ENCODE measurements at regions of chr6 and their contacts with region 1.

Region 1: GRCh38 chr6:142459271-142459670 is 157.5 kb downstream of the ADGRG6 start:
- DNase-seq: no peak
- ATAC-seq: no peak
- H3K4me3 ChIP-seq: no peak overlapping the region
- H3K27ac ChIP-seq: no peak overlapping the region
- H3K4me1 ChIP-seq: no peaks in the 10 kb centered on the region
- H3K27me3 ChIP-seq: no peaks in the 10 kb centered on the region
- CTCF ChIP-seq: no peak
- EP300 ChIP-seq: no peak
- POLR2A ChIP-seq: no peak
- RAD21 ChIP-seq: no peak

Region 2: GRCh38 chr6:142474531-142475289 is 15.4 kb after region 1 on chr6:
- CTCF ChIA-PET with region 1: interaction called, 10 read pairs
- POLR2A ChIA-PET with region 1: no interaction called
- RAD21 ChIA-PET with region 1: no interaction called
- SMC1A ChIA-PET with region 1: interaction called, 3 read pairs
- in situ Hi-C with region 1: no loop called
- intact Hi-C with region 1: no loop called
- DNase-seq: no peak
- ATAC-seq: peak; percentile 69
- H3K4me3 ChIP-seq: no peak overlapping the region
- H3K27ac ChIP-seq: no peak overlapping the region
- H3K4me1 ChIP-seq: no peaks in the 10 kb centered on the region
- H3K27me3 ChIP-seq: no peaks in the 10 kb centered on the region; a peak in 1 of 4 replicates
- CTCF ChIP-seq: peak; percentile 53 to 79 (median 64); a peak in 5 of 6 replicates
- EP300 ChIP-seq: no peak
- POLR2A ChIP-seq: no peak
- RAD21 ChIP-seq: peak; percentile 89